ENCODE measurements at regions of chr3 and their contacts with region 1.

Region 1: DNA sequence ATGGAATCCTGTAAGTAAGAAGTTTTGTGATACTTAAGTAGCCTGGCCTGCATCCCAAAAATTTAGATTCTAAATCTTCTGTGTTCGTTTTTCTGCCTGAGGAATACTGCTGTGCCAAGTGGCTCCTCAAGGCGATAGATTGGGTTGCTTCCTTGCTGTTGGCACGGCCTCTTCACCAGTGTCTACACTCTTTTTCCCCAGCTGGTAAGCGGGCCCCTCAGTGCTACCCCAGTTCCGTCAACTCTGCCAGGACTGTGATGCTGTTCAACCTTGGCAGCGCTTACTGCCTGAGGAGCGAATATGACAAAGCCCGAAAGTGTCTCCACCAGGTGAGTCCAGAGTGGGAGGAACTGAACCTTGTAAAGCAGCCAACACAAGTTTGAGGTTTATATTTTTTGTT is 53.3 kb upstream of the TRIM71 start:
- DNase-seq: no peak

Region 2: GRCh38 chr3:30952786-30953185 is 1811.7 kb before region 1 on chr3:
- intact Hi-C with region 1: no loop called
- DNase-seq: no peak

Region 3: DNA sequence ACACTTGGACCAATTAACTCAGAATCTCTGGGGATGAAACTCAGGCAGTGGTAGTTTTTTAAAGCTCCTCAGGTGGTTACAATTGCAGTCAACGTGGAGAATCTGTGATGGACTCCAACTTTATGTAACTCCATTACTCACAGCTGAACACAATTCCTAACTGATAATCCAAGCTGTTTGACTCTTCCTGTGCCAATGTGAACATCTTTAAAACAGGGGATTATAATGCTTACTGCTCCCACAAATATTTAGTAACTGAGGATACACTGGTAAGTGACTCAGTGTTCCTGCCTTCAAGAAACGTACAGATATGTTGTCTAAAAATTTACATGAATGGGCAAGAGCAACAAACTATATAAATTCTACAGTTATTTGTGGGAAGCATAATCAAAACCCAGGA is 869.0 kb before region 1 on chr3:
- intact Hi-C with region 1: loop called in 1 of 2 experiments (anchors 5 kb)
- DNase-seq: no peak

Region 4: DNA sequence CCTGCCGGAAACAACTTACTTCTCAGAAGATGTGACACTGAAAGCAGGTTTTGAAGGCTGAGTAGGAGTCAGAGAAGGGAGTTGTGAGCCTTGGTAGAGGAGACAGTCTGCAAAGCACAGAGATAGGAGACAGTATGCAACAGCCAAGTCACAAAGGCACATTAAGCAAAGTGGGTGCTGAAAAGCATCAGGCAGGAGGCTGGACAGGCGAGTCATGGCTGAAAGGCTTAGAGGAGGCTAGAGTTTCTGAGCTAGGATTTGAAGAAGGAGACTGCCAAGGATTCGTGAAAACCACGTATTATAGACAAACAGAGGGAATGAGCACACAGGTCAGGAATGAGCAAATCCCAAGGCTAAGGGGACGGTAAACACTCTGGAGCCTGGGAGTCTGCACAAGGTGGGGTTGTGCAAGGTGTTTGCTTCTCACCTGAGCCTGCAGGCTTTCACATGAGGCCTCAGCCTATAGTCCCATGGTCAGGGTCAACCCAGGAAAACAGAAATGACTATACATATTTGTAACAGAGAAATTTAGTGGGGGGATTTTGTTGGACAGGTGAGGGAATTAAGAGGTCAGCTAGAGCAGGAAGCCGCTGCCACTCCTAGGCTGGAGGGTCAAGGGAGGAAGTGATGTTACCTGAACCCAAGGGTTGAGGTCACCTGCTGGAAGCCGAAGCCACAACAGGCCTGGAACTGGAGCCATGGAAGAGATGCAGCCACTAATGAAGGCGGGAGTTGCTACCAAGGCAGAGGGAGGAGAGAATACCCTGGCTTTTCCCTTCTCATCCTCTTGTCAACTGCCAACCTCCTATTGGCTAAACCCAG is 30.2 kb after region 1 on chr3:
- intact Hi-C with region 1: no loop called
- DNase-seq: no peak